PC-9 (cell line): ENCODE measurements at regions of chrX and their contacts with region 1.

Region 1: DNA sequence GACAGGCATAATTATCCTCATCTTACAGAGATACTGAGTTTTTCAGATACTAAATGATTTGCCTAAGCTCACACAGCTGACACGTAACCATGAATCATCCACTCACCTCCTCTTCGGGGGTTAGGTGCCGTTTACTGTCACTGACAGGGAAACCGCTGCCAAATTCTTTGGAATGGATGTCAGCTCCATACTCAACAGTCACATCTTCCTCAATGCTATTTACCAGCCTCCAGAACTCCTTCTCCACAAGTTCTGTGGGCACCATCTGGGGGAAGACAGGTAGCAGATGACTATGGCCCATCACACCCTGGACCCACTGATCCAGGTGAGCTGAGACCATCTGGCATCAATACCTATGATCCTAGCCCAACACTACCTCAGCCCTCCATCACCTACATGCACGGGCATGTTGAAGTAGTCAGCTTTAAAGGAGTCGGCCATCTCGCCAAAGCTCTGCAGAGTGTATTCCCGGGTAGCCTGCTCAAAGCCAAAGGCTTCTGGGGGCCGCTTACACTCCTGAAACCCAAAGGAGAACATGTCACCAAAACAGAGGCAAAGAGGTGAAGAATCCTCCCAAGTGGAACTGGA is 13.5 kb downstream of the KDM5C start:
- DNase-seq: no peak
- H3K4me3 ChIP-seq: no peak overlapping the region
- H3K27ac ChIP-seq: no peak overlapping the region
- H3K4me1 ChIP-seq: no peaks in the 10 kb centered on the region
- H3K27me3 ChIP-seq: no peaks in the 10 kb centered on the region
- CTCF ChIP-seq: no peak

Region 2: DNA sequence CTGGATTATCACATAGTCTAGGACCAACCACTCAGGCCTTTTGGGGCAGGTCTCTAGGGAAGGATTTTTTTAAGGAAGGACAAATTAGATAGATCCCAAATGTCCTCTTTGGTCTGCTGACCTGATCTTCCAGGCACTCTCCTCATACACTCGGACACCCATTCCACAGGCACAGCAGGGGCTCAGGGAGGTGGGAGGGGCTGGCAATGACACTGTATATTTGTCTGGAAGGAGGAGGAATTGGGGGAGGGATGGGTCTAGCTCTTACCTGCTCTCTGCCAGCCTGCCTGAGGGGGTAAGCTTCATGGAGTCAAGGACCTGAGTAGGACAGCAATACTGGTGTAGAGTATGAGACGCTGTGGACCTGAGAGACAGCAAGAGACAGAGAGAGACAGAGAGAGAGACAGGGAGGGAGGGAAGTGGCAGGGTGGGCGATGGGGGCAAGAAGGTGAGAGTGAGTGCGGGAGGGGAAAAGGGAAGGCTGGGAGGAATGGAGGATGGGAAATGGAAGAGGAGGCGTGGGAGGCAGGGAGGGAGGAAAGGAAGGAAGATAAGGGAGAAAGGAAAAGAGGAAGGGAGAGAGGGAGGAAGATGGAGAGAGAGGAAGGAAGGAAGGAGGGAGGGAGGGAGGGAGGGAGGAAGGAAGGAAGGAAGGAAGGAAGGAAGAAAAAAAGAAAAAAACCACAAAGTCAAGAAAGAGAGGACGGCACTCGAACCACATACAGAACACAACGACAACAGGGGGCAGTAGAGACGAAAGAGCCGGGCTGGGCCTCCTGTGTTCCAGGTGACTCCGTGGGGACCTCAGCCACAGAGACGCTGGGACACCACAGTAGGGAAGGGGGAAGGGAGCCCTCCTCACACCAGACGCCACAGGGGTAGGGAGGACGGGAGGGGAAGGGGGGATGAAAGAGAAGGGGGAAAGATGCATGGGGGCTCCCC is 68.1 kb after region 1 on chrX:
- CTCF ChIA-PET with region 1: no interaction called
- POLR2A ChIA-PET with region 1: interaction called, 15 read pairs
- intact Hi-C with region 1: no loop called
- DNase-seq: peak in 1 of 2 experiments; percentile 20
- H3K4me3 ChIP-seq: peak overlapping the region; percentile 55; the same call in 1 of the 2 replicates
- H3K27ac ChIP-seq: peak overlapping the region; percentile 78; the same call in 1 of the 2 replicates
- H3K4me1 ChIP-seq: peaks cover 4% of the 10 kb centered on the region; the same call in 1 of the 2 replicates
- H3K27me3 ChIP-seq: no peaks in the 10 kb centered on the region
- CTCF ChIP-seq: no peak

Region 3: DNA sequence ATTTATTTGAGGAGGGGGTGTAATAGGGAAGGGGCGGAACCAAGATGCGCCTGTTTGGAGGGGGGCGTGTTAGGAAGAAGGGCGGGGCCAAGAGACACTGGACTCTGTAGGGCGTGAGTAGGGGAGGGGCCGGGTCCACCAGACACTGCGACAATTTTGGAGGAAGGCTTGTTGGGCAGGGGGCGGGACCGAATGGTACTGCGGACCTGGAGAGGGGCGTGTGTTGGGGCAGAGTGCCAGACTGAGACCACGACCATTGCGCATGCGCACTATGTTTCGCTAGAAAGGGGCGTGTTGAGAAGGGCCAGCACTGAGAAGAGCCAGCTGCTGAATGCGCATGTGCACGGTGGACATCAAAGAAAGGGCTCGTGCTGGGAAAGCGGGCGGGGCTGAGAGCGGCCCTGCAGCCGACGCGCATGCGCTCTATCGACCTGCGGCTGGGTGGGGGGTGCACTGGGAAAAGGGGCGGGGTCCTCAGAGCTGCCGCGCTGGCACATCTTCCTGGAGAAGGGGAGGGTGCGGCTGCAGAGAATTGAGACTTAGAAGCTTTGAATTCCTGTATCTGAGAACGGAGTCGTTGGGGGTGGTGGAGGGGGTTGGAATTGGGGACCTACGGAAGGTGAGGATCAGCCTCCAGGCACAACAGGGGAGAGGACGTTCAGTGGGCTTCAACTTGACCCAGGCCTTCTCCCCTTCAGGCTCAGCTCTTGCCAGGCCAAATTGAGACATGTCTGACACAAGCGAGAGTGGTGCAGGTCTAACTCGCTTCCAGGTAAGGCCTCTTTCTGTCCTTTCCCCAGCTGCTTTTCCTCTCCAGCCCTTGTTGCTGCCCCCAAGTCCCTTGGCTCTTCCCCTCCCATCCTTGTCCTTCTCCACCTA is 1597.4 kb after region 1 on chrX:
- CTCF ChIA-PET with region 1: no interaction called
- POLR2A ChIA-PET with region 1: interaction called, 19 read pairs
- intact Hi-C with region 1: no loop called
- DNase-seq: peak; percentile 84 to 97
- H3K4me3 ChIP-seq: peak overlapping the region; percentile 86
- H3K27ac ChIP-seq: no peak overlapping the region
- H3K4me1 ChIP-seq: peaks cover 8% of the 10 kb centered on the region; the same call in 1 of the 2 replicates
- H3K27me3 ChIP-seq: peaks cover 9% of the 10 kb centered on the region; the same call in 1 of the 2 replicates
- CTCF ChIP-seq: no peak